Activated naive CD4-positive, alpha-beta T cell treated with anti-CD3 and anti-CD28 coated beads for 36 hours (primary cell): ENCODE measurements at regions of chr1 and their contacts with region 1.

Region 1: DNA sequence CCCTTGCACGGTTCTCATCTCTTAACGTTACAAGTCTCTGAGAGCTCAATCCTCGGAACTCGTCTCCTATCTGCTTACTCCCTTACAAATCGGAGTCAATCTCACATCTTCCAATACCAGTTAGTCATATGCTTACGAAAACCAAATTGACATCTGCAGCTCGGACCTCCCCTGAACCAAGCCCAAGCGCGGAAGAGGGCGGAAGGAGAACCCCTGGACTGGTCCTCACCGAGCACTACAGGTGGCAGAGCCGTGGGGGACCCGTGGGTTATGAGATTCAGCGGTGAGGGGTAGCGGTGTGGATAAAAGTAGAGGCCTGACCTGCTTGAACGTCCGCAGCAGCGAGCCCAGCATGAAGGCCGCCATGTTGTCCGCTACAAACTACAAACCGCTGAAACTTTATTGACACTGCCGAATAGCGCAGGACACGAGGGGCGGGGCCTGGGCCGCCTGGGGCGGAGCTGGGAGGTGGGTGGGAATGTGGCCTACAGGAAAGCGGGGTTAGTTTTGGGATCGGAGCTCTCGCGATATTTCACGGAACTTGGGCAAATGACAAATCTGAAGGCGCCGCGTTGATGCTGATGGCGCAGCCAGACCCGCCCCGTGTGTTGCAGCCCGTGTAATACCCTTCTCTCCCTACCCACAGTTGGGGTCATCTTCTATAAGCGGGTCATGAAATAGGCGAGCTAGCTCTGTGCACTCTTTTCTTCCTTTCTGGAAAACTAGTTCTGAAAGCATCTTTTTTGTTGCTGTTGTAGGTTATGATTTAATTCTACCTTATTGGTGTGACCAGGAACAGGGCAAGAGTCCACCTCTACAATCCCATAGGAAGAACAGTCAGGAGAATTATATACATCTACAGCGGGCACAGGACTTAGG is at the start of gene MRPS14:
- DNase-seq: peak; percentile 100
- H3K4me3 Mint-ChIP-seq: peak within 1 kb of the TSS; percentile 87
- H3K27ac Mint-ChIP-seq: peak within 1 kb of the TSS; percentile 86
- H3K4me1 Mint-ChIP-seq: peaks cover 31% of the 10 kb centered on the region
- H3K27me3 Mint-ChIP-seq: no peaks in the 10 kb centered on the region
- total RNA-seq, gene MRPS14: 48.8 to 51.2 TPM

Region 2: DNA sequence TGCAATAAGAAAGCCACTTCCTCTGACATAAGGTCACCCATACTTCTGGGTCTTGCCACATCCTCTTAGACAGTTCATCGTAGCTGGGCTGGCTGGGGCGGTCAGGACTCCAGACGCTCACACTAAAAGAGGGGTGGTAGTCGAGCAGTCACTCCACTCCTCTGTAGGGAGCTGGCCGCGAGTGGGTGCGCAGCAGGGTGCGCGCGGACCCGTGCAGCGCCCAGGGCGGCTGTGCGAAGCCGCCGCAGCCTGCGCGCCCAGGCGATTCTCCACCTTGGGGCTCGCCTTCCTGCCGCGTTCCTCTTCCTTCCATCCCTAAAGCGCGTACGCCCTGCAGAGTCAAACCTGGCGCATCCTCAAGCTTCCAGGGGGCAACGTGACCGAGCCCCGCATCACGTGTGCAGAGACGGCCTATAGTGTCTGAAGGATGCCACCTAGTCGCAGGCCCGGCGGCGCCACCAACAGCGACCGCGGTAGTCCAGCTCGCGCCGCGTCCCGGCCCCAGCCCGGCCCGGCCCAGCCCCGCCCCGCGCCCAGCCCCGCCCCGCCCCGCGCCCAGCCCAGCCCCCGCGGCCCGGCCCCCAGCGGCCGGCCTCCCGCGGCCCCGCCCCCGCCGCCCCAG is 1546.5 kb before region 1 on chr1:
- CTCF ChIA-PET with region 1: no interaction called
- intact Hi-C with region 1: loop called (anchors 10 kb)
- DNase-seq: peak; percentile 86
- H3K4me3 Mint-ChIP-seq: peak overlapping the region; percentile 91
- H3K27ac Mint-ChIP-seq: peak overlapping the region; percentile 93
- H3K4me1 Mint-ChIP-seq: peaks cover 58% of the 10 kb centered on the region
- H3K27me3 Mint-ChIP-seq: no peaks in the 10 kb centered on the region

Region 3: DNA sequence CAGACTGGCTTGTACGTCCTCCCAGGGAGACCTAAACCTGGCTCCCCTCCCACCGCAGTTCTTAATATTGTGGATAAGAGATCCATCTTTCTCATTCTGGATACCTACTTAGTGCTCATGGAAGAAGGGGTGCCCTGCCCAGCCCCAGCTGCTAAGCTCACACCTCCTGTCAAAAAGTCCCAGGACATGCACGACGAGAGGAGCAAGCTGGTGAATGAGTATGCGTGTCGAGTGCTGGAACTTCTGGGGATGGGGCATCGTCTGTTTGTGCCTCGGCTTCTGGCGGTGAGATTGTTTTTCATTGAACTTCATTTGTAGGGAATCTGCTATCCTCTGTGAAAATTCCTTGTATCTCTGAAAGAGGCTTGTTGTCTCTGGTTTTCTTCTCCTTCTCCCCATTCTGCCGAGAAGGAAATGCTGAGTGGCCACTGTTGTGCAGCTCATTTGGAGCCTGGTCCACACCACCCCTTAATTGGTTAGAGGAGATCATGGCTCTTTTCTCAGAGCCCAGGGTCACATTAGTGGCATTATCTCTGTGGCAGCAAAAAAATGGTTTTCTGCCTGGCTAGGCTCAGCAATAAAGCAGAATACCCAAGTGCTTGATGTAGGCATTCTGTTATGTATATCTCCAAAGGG is 222.9 kb before region 1 on chr1:
- CTCF ChIA-PET with region 1: no interaction called
- intact Hi-C with region 1: loop called (anchors 1 kb)
- DNase-seq: peak; percentile 47
- H3K4me3 Mint-ChIP-seq: no peak overlapping the region
- H3K27ac Mint-ChIP-seq: no peak overlapping the region
- H3K4me1 Mint-ChIP-seq: peaks cover 8% of the 10 kb centered on the region
- H3K27me3 Mint-ChIP-seq: no peaks in the 10 kb centered on the region

Region 4: GRCh38 chr1:174990382-174990999 is 32.8 kb before region 1 on chr1:
- CTCF ChIA-PET with region 1: interaction called, 10 read pairs
- intact Hi-C with region 1: no loop called
- DNase-seq: no peak
- H3K4me3 Mint-ChIP-seq: peak overlapping the region; percentile 75
- H3K27ac Mint-ChIP-seq: peak overlapping the region; percentile 83
- H3K4me1 Mint-ChIP-seq: peaks cover 21% of the 10 kb centered on the region
- H3K27me3 Mint-ChIP-seq: no peaks in the 10 kb centered on the region

Region 5: DNA sequence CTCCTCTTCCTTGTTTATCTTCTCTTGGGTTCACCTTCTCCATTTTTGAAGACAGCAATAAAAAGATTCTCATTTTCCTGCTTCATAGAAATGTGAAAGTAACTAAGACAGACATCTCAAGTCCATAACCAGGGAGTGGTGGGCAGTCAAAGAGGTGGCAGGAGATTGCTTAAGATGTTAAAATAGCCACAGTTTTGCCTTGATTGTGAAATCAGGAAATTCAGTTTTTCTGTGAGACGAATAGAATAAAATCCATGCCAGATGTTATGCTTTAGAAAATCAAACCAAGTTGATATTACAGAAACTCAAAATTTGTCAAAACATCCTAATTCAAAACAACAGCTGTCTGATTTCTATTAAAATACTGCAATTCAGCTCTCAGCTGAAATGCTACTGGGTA is 101.6 kb after region 1 on chr1:
- CTCF ChIA-PET with region 1: interaction called, 118 read pairs
- intact Hi-C with region 1: no loop called
- DNase-seq: no peak
- H3K4me3 Mint-ChIP-seq: no peak overlapping the region
- H3K27ac Mint-ChIP-seq: no peak overlapping the region
- H3K4me1 Mint-ChIP-seq: no peaks in the 10 kb centered on the region
- H3K27me3 Mint-ChIP-seq: no peaks in the 10 kb centered on the region

Region 6: DNA sequence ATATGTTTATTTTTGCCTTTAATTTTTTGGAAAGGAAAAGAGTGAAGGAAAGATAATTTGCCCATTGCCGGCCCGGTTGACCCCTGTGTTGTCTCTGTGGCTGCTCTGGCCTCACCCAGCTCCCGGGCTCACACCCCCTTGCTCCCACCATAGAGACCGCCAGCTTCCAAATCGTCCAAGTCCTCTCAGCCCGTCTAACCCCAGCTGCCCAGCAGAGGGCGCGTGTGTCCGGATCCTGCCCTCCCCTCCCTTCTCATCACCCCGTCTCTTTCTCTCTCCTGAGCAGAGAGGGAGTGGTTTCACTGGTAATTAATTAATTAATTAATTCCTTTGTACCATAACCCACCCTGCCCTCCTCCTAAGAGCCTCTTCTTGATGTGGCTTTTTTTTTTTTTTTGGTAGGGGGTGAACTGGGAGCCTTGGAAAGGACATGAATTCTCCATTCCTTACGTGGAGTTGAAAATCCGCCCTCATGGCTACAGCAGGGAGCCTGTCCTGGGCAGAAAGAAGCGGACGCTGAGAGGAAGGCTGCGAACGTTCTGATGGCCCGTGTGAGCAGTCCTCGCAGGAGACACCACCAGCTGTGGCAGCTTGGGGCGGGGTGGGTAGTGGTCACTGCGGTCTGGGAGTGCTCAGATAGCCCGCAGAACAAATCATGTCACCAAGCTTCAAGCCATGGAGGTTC is 123.4 kb after region 1 on chr1:
- CTCF ChIA-PET with region 1: interaction called, 33 read pairs
- intact Hi-C with region 1: no loop called
- DNase-seq: peak; percentile 80
- H3K4me3 Mint-ChIP-seq: no peak overlapping the region
- H3K27ac Mint-ChIP-seq: no peak overlapping the region
- H3K4me1 Mint-ChIP-seq: peaks cover 2% of the 10 kb centered on the region
- H3K27me3 Mint-ChIP-seq: peaks cover 13% of the 10 kb centered on the region

Region 7: GRCh38 chr1:176206961-176207902 is 1184.0 kb after region 1 on chr1 and contains the start of gene COP1:
- CTCF ChIA-PET with region 1: no interaction called
- intact Hi-C with region 1: loop called (anchors 5 kb)
- DNase-seq: peak; percentile 97
- H3K4me3 Mint-ChIP-seq: peak within 1 kb of the TSS; percentile 98
- H3K27ac Mint-ChIP-seq: peak within 1 kb of the TSS; percentile 98
- H3K4me1 Mint-ChIP-seq: peaks cover 30% of the 10 kb centered on the region
- H3K27me3 Mint-ChIP-seq: no peaks in the 10 kb centered on the region
- total RNA-seq, gene COP1: 37.4 to 37.6 TPM